Psoas muscle (tissue), 8 donors: ENCODE measurements at regions of chr18 and their contacts with region 1.

Region 1: GRCh38 chr18:79139206-79139605 is 70.0 kb downstream of the ATP9B start:
- DNase-seq: no peak
- ATAC-seq: no peak
- H3K4me3 ChIP-seq: no peak overlapping the region
- H3K27ac ChIP-seq: no peak overlapping the region
- H3K4me1 ChIP-seq: no peaks in the 10 kb centered on the region
- H3K27me3 ChIP-seq: no peaks in the 10 kb centered on the region
- CTCF ChIP-seq: no peak

Region 2: DNA sequence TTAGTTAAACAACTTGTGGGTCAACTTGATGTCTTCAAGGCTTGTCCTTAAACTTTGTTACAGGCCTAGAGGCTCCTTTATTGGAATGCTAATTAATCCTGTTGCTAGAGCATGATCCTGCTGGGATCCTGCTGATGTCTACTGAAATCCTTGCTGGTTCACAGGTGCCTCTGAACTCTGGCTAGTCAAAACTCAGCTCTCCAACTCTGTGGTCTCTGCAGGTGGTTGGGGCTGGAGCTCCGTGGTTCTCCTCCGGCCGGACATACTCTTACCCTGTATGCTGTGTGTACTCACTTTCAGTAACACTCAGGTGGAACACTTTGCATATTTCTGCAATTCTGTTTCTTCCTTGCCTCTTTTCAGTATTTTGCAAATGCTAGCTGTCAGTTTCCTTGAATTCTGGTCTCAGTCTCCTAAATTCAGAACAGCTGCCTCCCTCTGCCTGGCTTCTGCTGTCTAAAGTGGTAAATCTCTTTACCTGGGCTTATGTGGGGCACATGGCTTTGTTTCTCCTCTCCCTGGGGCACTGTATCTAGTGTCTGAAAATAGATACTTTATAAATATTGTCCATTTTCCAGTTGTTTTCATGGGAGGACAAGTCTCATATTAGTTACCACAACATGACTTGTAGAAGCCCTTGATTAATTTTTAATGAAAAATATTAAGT is 43.0 kb after region 1 on chr18:
- intact Hi-C with region 1: loop called in 1 of 2 experiments (anchors 5 kb)
- DNase-seq: no peak
- ATAC-seq: no peak
- H3K4me3 ChIP-seq: no peak overlapping the region
- H3K27ac ChIP-seq: no peak overlapping the region
- H3K4me1 ChIP-seq: no peaks in the 10 kb centered on the region
- H3K27me3 ChIP-seq: no peaks in the 10 kb centered on the region
- CTCF ChIP-seq: no peak

Region 3: GRCh38 chr18:79218605-79219190 is 79.5 kb after region 1 on chr18:
- intact Hi-C with region 1: no loop called
- DNase-seq: no peak
- ATAC-seq: peak; percentile 23 to 65 (median 46)
- H3K4me3 ChIP-seq: peak overlapping the region; percentile 61
- H3K27ac ChIP-seq: peak overlapping the region; percentile 87
- H3K4me1 ChIP-seq: peaks cover 10% of the 10 kb centered on the region
- H3K27me3 ChIP-seq: no peaks in the 10 kb centered on the region
- CTCF ChIP-seq: no peak